ENCODE measurements at regions of chr6 and their contacts with region 1.

Region 1: GRCh38 chr6:38784506-38785235 is 69.6 kb downstream of the DNAH8 start:
- DNase-seq: no peak
- H3K4me3 ChIP-seq: no peak overlapping the region
- H3K27ac ChIP-seq: no peak overlapping the region
- H3K4me1 ChIP-seq: no peaks in the 10 kb centered on the region
- H3K27me3 ChIP-seq: no peaks in the 10 kb centered on the region
- CTCF ChIP-seq: no peak

Region 2: GRCh38 chr6:38773338-38773737 is 11.3 kb before region 1 on chr6:
- CTCF ChIA-PET with region 1: interaction called, 10 read pairs
- POLR2A ChIA-PET with region 1: no interaction called
- intact Hi-C with region 1: no loop called
- DNase-seq: no peak
- H3K4me3 ChIP-seq: no peak overlapping the region
- H3K27ac ChIP-seq: no peak overlapping the region
- H3K4me1 ChIP-seq: no peaks in the 10 kb centered on the region
- H3K27me3 ChIP-seq: no peaks in the 10 kb centered on the region
- CTCF ChIP-seq: peak; percentile 69

Measured in PC-9 (cell line).